ENCODE measurements at regions of chr11 and their contacts with region 1.

Region 1: GRCh38 chr11:10540923-10541560 is at the start of gene RNF141:
- DNase-seq: peak; percentile 95
- ATAC-seq: peak; percentile 97
- H3K4me3 Mint-ChIP-seq: peak within 1 kb of the TSS; percentile 84
- H3K27ac Mint-ChIP-seq: peak within 1 kb of the TSS; percentile 78
- H3K4me1 Mint-ChIP-seq: peaks cover 21% of the 10 kb centered on the region
- H3K27me3 Mint-ChIP-seq: peaks cover under 1% of the 10 kb centered on the region
- total RNA-seq, gene RNF141: 9.4 to 10.1 TPM

Region 2: DNA sequence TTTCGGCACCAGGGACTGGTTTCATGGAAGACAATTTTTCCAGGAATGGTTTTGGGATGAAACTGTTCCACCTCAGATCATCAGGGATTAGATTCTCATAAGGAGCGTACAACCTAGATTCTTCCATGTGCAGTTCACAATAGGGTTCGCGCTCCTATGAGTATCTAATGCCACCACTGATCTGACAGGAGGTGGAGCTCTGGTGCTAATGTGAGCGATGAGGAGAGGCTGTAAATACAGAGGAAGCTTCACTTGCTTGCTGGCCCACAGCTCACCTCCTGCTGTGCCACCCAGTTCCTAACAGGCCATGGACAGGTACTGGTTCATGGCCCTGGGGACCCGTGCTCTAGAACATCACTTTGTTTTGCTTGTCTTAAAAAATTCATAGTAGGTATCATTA is 127.8 kb before region 1 on chr11:
- CTCF ChIA-PET with region 1: interaction called, 26 read pairs
- DNase-seq: peak; percentile 71
- ATAC-seq: peak; percentile 81
- H3K4me3 Mint-ChIP-seq: no peak overlapping the region
- H3K27ac Mint-ChIP-seq: no peak overlapping the region
- H3K4me1 Mint-ChIP-seq: peaks cover 36% of the 10 kb centered on the region
- H3K27me3 Mint-ChIP-seq: peaks cover 7% of the 10 kb centered on the region

Region 3: GRCh38 chr11:10455637-10456487 is 85.2 kb before region 1 on chr11:
- CTCF ChIA-PET with region 1: interaction called, 24 read pairs
- DNase-seq: peak; percentile 89
- ATAC-seq: peak; percentile 83
- H3K4me3 Mint-ChIP-seq: peak overlapping the region; percentile 93
- H3K27ac Mint-ChIP-seq: peak overlapping the region; percentile 87
- H3K4me1 Mint-ChIP-seq: peaks cover 68% of the 10 kb centered on the region
- H3K27me3 Mint-ChIP-seq: peaks cover 11% of the 10 kb centered on the region

Region 4: DNA sequence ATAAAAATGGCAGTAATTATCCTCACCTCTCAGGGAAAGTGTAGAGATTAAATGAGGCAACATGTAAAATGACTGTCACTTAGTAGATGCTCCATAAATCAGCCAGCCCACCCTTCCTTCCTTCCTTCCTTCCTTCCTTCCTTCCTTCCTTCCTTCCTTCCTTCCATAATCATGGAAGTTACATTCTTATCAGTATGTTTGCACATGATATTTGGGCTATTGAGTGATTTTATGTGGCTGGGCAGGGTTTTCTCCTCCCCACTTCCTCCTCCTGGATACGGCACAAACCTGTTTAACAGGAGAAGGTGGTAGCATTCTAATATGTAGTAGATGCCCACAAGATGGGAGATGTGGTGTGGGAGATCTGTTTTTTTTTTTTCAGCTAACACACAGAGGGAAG is 15.5 kb after region 1 on chr11:
- CTCF ChIA-PET with region 1: interaction called, 12 read pairs
- DNase-seq: no peak
- ATAC-seq: no peak
- H3K4me3 Mint-ChIP-seq: no peak overlapping the region
- H3K27ac Mint-ChIP-seq: no peak overlapping the region
- H3K4me1 Mint-ChIP-seq: no peaks in the 10 kb centered on the region
- H3K27me3 Mint-ChIP-seq: peaks cover 30% of the 10 kb centered on the region

Measured in activated CD8-positive, alpha-beta memory T cell treated with anti-CD3 and anti-CD28 coated beads, Interleukin-2, amount 10 ng/mL, durations not matched to agents 7 days and 5 days (primary cell).